BJ (cell line): ENCODE measurements at regions of chr11 and their contacts with region 1.

Region 1: GRCh38 chr11:111870886-111871692 is at the start of gene ALG9:
- DNase-seq: no peak
- H3K4me3 ChIP-seq: peak within 1 kb of the TSS; percentile 85
- H3K27me3 ChIP-seq: no peaks in the 10 kb centered on the region
- CTCF ChIP-seq: peak; percentile 49
- polyA plus RNA-seq, gene ALG9: 23.7 and 38.2 TPM in 2 replicates

Region 2: GRCh38 chr11:111926505-111927391 is 55.7 kb after region 1 on chr11:
- CTCF ChIA-PET with region 1: interaction called, 11 read pairs
- POLR2A ChIA-PET with region 1: no interaction called
- DNase-seq: peak; percentile 86
- H3K4me3 ChIP-seq: peak overlapping the region; percentile 40
- H3K27me3 ChIP-seq: no peaks in the 10 kb centered on the region
- CTCF ChIP-seq: peak; percentile 7; the same call in 1 of the 2 replicates

Region 3: DNA sequence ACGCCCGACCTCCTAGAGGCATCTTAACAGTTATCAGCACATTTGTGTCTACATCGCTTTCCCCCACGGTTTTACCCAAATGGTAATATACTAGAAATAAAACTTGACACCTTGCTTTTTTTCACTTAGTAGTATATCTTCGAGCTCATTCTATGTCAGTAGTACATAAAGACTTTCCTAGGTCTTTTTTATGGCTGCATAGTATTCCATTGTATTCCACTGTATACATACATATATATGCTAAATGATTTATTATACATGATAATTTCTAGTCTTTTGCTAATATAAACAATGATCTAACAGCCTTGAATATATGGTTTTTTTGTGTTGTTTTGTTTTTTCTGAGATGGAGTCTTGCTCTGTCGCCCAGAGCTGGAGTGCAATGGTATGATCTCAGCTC is 119.3 kb after region 1 on chr11:
- CTCF ChIA-PET with region 1: interaction called, 3 read pairs
- POLR2A ChIA-PET with region 1: interaction called, 12 read pairs
- DNase-seq: no peak
- H3K4me3 ChIP-seq: no peak overlapping the region
- H3K27me3 ChIP-seq: no peaks in the 10 kb centered on the region
- CTCF ChIP-seq: no peak